HepG2 (cell line): ENCODE measurements at regions of chr6 and their contacts with region 1.

Region 1: DNA sequence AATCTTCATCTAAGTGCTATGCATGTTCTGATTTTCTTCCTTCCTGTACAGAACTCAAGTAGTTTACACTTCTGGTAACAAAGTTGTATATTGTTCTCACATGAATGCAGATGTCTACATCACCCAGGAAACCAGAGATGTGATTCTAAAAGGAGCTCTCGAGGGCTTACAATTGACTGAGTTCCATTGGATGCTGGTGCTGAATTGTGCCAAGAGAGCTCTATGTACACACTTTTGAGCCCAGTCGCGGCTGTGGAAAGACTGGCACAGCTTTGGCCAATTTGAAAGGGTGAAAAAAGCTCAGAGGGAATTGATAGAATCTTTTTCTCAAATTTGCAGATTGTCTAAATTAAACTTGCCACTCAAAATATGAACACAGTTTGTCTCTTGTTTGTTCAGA is 340.7 kb downstream of the LMBRD1 start:
- DNase-seq: no peak
- ATAC-seq: no peak
- H3K4me3 ChIP-seq: no peak overlapping the region
- H3K27ac ChIP-seq: no peak overlapping the region
- H3K4me1 ChIP-seq: no peaks in the 10 kb centered on the region
- H3K27me3 ChIP-seq: no peaks in the 10 kb centered on the region
- CTCF ChIP-seq: no peak
- EP300 ChIP-seq: no peak
- POLR2A ChIP-seq: no peak
- RAD21 ChIP-seq: no peak

Region 2: GRCh38 chr6:68527691-68528090 is 928.4 kb before region 1 on chr6:
- CTCF ChIA-PET with region 1: no interaction called
- POLR2A ChIA-PET with region 1: no interaction called
- in situ Hi-C with region 1: no loop called
- intact Hi-C with region 1: no loop called
- DNase-seq: no peak
- ATAC-seq: no peak
- H3K4me3 ChIP-seq: no peak overlapping the region
- H3K27ac ChIP-seq: no peak overlapping the region
- H3K4me1 ChIP-seq: no peaks in the 10 kb centered on the region
- H3K27me3 ChIP-seq: no peaks in the 10 kb centered on the region
- CTCF ChIP-seq: no peak
- EP300 ChIP-seq: no peak
- POLR2A ChIP-seq: no peak
- RAD21 ChIP-seq: no peak

Region 3: GRCh38 chr6:69138893-69139494 is 317.1 kb before region 1 on chr6:
- CTCF ChIA-PET with region 1: no interaction called
- POLR2A ChIA-PET with region 1: no interaction called
- in situ Hi-C with region 1: no loop called
- intact Hi-C with region 1: no loop called
- DNase-seq: no peak
- ATAC-seq: no peak
- H3K4me3 ChIP-seq: no peak overlapping the region
- H3K27ac ChIP-seq: no peak overlapping the region
- H3K4me1 ChIP-seq: no peaks in the 10 kb centered on the region
- H3K27me3 ChIP-seq: no peaks in the 10 kb centered on the region
- CTCF ChIP-seq: no peak
- EP300 ChIP-seq: no peak
- POLR2A ChIP-seq: no peak
- RAD21 ChIP-seq: no peak

Region 4: GRCh38 chr6:69466979-69467570 is 11.0 kb after region 1 on chr6:
- CTCF ChIA-PET with region 1: no interaction called
- POLR2A ChIA-PET with region 1: no interaction called
- in situ Hi-C with region 1: no loop called
- intact Hi-C with region 1: no loop called
- DNase-seq: no peak
- ATAC-seq: no peak
- H3K4me3 ChIP-seq: no peak overlapping the region
- H3K27ac ChIP-seq: no peak overlapping the region
- H3K4me1 ChIP-seq: no peaks in the 10 kb centered on the region
- H3K27me3 ChIP-seq: no peaks in the 10 kb centered on the region
- CTCF ChIP-seq: no peak
- EP300 ChIP-seq: no peak
- POLR2A ChIP-seq: no peak
- RAD21 ChIP-seq: no peak

Region 5: GRCh38 chr6:69487688-69488087 is 31.6 kb after region 1 on chr6:
- CTCF ChIA-PET with region 1: no interaction called
- POLR2A ChIA-PET with region 1: no interaction called
- in situ Hi-C with region 1: no loop called
- intact Hi-C with region 1: loop called (anchors 1 kb)
- DNase-seq: no peak
- ATAC-seq: no peak
- H3K4me3 ChIP-seq: no peak overlapping the region
- H3K27ac ChIP-seq: no peak overlapping the region
- H3K4me1 ChIP-seq: no peaks in the 10 kb centered on the region
- H3K27me3 ChIP-seq: no peaks in the 10 kb centered on the region
- CTCF ChIP-seq: peak; percentile 28; the same call in 1 of the 2 replicates
- EP300 ChIP-seq: no peak
- POLR2A ChIP-seq: no peak
- RAD21 ChIP-seq: no peak